CD8-positive, alpha-beta T cell (primary cell): ENCODE measurements at regions of chr11 and their contacts with region 1.

Region 1: DNA sequence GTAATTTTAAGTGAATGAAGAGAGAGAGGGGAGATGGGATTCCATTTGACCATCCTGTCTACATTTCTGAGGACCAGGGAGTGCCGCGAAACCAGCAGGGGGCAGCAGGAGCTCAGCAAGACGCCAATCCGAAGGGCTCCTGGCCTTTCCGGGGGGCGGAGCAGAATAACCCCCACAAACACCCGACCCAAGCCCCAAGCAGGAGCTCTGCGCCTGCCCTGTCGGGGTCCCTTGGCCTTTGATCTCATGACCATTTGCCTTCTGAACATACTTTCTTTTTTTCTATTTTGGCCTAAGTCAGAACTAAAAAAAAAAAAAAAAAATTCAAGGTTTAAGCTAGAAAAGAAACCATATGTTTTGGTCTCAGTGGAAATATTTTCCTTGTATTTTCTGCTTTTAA is 21.9 kb upstream of the SCN2B start:
- DNase-seq: peak; percentile 68 to 89 (median 88)
- ATAC-seq: peak; percentile 18
- H3K4me3 ChIP-seq: no peak overlapping the region
- H3K4me3 Mint-ChIP-seq: peak overlapping the region; percentile 27
- H3K27ac ChIP-seq: no peak overlapping the region
- H3K27ac Mint-ChIP-seq: peak overlapping the region; percentile 81
- H3K4me1 ChIP-seq: peaks cover 46% of the 10 kb centered on the region
- H3K4me1 Mint-ChIP-seq: peaks cover 11% of the 10 kb centered on the region
- H3K27me3 ChIP-seq: no peaks in the 10 kb centered on the region
- H3K27me3 Mint-ChIP-seq: no peaks in the 10 kb centered on the region
- CTCF ChIP-seq: peak; percentile 95

Region 2: GRCh38 chr11:118171269-118172062 is 26.9 kb before region 1 on chr11:
- CTCF ChIA-PET with region 1: interaction called, 11 read pairs
- POLR2A ChIA-PET with region 1: interaction called, 5 read pairs
- intact Hi-C with region 1: no loop called
- DNase-seq: peak; percentile 45 to 83 (median 72)
- ATAC-seq: peak; percentile 96
- H3K4me3 ChIP-seq: no peak overlapping the region
- H3K4me3 Mint-ChIP-seq: no peak overlapping the region
- H3K27ac ChIP-seq: no peak overlapping the region
- H3K27ac Mint-ChIP-seq: no peak overlapping the region
- H3K4me1 ChIP-seq: peaks cover 8% of the 10 kb centered on the region
- H3K4me1 Mint-ChIP-seq: peaks cover 2% of the 10 kb centered on the region
- H3K27me3 ChIP-seq: no peaks in the 10 kb centered on the region
- H3K27me3 Mint-ChIP-seq: peaks cover 3% of the 10 kb centered on the region
- CTCF ChIP-seq: peak; percentile 95

Region 3: GRCh38 chr11:118216621-118217481 is 18.5 kb after region 1 on chr11:
- CTCF ChIA-PET with region 1: interaction called, 29 read pairs
- POLR2A ChIA-PET with region 1: interaction called, 13 read pairs
- intact Hi-C with region 1: loop called (anchors 2 kb)
- DNase-seq: peak in 5 of 9 experiments; percentile 46 to 76 (median 51)
- ATAC-seq: peak; percentile 70
- H3K4me3 ChIP-seq: peak overlapping the region; percentile 20 to 31
- H3K4me3 Mint-ChIP-seq: peak overlapping the region; percentile 81
- H3K27ac ChIP-seq: peak overlapping the region; percentile 10 to 43
- H3K27ac Mint-ChIP-seq: peak overlapping the region; percentile 95
- H3K4me1 ChIP-seq: peaks cover 100% of the 10 kb centered on the region
- H3K4me1 Mint-ChIP-seq: peaks cover 98% of the 10 kb centered on the region
- H3K27me3 ChIP-seq: no peaks in the 10 kb centered on the region
- H3K27me3 Mint-ChIP-seq: no peaks in the 10 kb centered on the region
- CTCF ChIP-seq: no peak

Region 4: GRCh38 chr11:118251858-118252652 is 53.7 kb after region 1 on chr11 and contains the start of gene MPZL3:
- CTCF ChIA-PET with region 1: interaction called, 27 read pairs
- POLR2A ChIA-PET with region 1: interaction called, 11 read pairs
- intact Hi-C with region 1: loop called in 1 of 2 experiments (anchors 2 kb)
- DNase-seq: peak; percentile 74 to 96 (median 87)
- ATAC-seq: peak; percentile 75
- H3K4me3 ChIP-seq: peak within 1 kb of the TSS; percentile 67 to 94
- H3K4me3 Mint-ChIP-seq: peak within 1 kb of the TSS; percentile 98
- H3K27ac ChIP-seq: peak within 1 kb of the TSS; percentile 93 to 97
- H3K27ac Mint-ChIP-seq: peak within 1 kb of the TSS; percentile 100
- H3K4me1 ChIP-seq: peaks cover 8% of the 10 kb centered on the region
- H3K4me1 Mint-ChIP-seq: peaks cover 41% of the 10 kb centered on the region
- H3K27me3 ChIP-seq: no peaks in the 10 kb centered on the region
- H3K27me3 Mint-ChIP-seq: no peaks in the 10 kb centered on the region
- CTCF ChIP-seq: no peak
- total RNA-seq, gene MPZL3: 15.3 to 16.8 TPM

Region 5: GRCh38 chr11:118290923-118291322 is 92.6 kb after region 1 on chr11:
- CTCF ChIA-PET with region 1: interaction called, 44 read pairs
- POLR2A ChIA-PET with region 1: interaction called, 3 read pairs
- intact Hi-C with region 1: loop called (anchors 1 kb)
- DNase-seq: peak in 7 of 9 experiments; percentile 16 to 74 (median 37)
- ATAC-seq: peak; percentile 43
- H3K4me3 ChIP-seq: no peak overlapping the region
- H3K4me3 Mint-ChIP-seq: no peak overlapping the region
- H3K27ac ChIP-seq: no peak overlapping the region
- H3K27ac Mint-ChIP-seq: no peak overlapping the region
- H3K4me1 ChIP-seq: peaks cover 7% of the 10 kb centered on the region
- H3K4me1 Mint-ChIP-seq: peaks cover 12% of the 10 kb centered on the region
- H3K27me3 ChIP-seq: no peaks in the 10 kb centered on the region
- H3K27me3 Mint-ChIP-seq: no peaks in the 10 kb centered on the region
- CTCF ChIP-seq: peak; percentile 42

Region 6: DNA sequence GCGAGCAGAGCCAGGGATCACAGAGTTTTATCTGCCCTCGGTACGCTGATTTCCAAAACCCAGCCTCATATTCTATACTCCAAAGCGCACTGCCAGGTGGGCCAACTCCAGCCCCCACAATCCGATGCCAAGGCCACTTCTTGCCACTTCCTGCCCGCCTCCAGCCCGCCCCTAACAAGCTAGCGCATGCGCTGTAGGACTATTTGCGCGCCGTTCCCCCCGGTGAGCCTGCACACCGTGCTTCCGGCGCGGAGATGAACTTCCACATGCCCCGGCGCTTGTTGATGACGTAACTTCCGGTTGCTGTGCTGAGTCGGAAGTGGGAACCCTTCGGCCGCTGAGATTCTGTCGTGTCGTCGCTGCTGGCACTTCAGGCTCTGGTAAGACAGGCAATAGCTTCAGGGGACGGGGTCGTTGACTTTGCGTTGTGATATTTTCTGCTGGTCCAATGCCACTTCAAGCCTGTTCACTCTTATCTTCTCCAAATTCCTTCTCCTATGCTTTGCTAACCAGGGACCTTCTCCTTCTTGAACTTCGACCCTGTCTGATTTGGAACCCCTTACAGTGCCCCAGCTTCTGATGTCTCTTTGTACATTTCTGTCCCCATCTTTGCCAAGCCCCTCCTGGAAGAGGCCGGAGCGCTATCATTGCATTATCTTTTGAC is 161.1 kb after region 1 on chr11 and contains the start of gene UBE4A:
- CTCF ChIA-PET with region 1: interaction called, 12 read pairs
- POLR2A ChIA-PET with region 1: interaction called, 3 read pairs
- intact Hi-C with region 1: no loop called
- DNase-seq: peak; percentile 93 to 100 (median 99)
- ATAC-seq: peak; percentile 80
- H3K4me3 ChIP-seq: peak within 1 kb of the TSS; percentile 66 to 89
- H3K4me3 Mint-ChIP-seq: peak within 1 kb of the TSS; percentile 93
- H3K27ac ChIP-seq: peak within 1 kb of the TSS; percentile 89 to 93
- H3K27ac Mint-ChIP-seq: peak within 1 kb of the TSS; percentile 98
- H3K4me1 ChIP-seq: peaks cover 38% of the 10 kb centered on the region
- H3K4me1 Mint-ChIP-seq: peaks cover 52% of the 10 kb centered on the region
- H3K27me3 ChIP-seq: no peaks in the 10 kb centered on the region
- H3K27me3 Mint-ChIP-seq: no peaks in the 10 kb centered on the region
- CTCF ChIP-seq: no peak
- total RNA-seq, gene UBE4A: 53.7 to 57.5 TPM